CD4-positive, alpha-beta memory T cell (primary cell): ENCODE measurements at regions of chr3 and their contacts with region 1.

Region 1: GRCh38 chr3:160720123-160720746 is 35.8 kb upstream of the PPM1L start:
- DNase-seq: no peak
- H3K4me3 ChIP-seq: no peak overlapping the region
- H3K4me3 Mint-ChIP-seq: no peak overlapping the region
- H3K27ac ChIP-seq: no peak overlapping the region
- H3K27ac Mint-ChIP-seq: no peak overlapping the region
- H3K4me1 ChIP-seq: no peaks in the 10 kb centered on the region
- H3K4me1 Mint-ChIP-seq: no peaks in the 10 kb centered on the region
- H3K27me3 ChIP-seq: no peaks in the 10 kb centered on the region
- H3K27me3 Mint-ChIP-seq: peaks cover 11 to 14% of the 10 kb centered on the region in 2 donors

Region 2: GRCh38 chr3:160498202-160498601 is 222.0 kb before region 1 on chr3:
- CTCF ChIA-PET with region 1: no interaction called
- POLR2A ChIA-PET with region 1: no interaction called
- intact Hi-C with region 1: no loop called
- DNase-seq: no peak
- H3K4me3 ChIP-seq: no peak overlapping the region
- H3K4me3 Mint-ChIP-seq: no peak overlapping the region
- H3K27ac ChIP-seq: no peak overlapping the region
- H3K27ac Mint-ChIP-seq: no peak overlapping the region
- H3K4me1 ChIP-seq: no peaks in the 10 kb centered on the region
- H3K4me1 Mint-ChIP-seq: no peaks in the 10 kb centered on the region
- H3K27me3 ChIP-seq: no peaks in the 10 kb centered on the region
- H3K27me3 Mint-ChIP-seq: no peaks in the 10 kb centered on the region

Region 3: DNA sequence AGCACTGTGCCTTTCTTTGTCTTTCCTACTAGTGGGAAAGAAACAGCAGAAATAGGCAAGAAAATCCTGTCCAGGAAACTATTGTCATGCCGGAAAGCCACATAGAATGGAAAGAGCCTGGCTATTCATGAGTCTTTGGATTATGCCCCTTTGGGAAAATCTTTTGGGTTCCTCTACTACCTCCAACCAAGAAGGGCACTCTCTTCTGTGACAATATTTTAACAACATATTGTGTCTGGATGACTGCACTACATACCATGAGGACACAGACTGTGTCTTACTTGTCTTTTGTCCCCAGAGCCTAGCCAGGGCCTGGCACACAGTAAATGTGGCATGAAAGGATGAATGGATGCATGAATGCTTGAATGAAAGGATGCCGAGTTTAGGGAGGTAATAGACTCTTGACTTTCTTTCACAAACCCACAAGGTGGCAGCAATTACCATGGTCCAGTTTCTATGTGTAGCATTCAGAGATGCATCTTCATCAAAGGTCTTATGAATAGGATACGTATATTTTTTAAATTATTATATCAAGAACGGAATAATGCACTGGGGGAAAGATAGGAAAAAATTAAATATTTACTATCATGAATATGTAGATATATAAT is 12.9 kb before region 1 on chr3:
- CTCF ChIA-PET with region 1: interaction called, 16 read pairs
- POLR2A ChIA-PET with region 1: no interaction called
- intact Hi-C with region 1: no loop called
- DNase-seq: peak in 4 of 5 donors; percentile 36 to 44 (median 40)
- H3K4me3 ChIP-seq: no peak overlapping the region
- H3K4me3 Mint-ChIP-seq: no peak overlapping the region
- H3K27ac ChIP-seq: no peak overlapping the region
- H3K27ac Mint-ChIP-seq: no peak overlapping the region
- H3K4me1 ChIP-seq: no peaks in the 10 kb centered on the region
- H3K4me1 Mint-ChIP-seq: no peaks in the 10 kb centered on the region
- H3K27me3 ChIP-seq: no peaks in the 10 kb centered on the region
- H3K27me3 Mint-ChIP-seq: peaks cover 24 to 36% of the 10 kb centered on the region in 2 donors

Region 4: DNA sequence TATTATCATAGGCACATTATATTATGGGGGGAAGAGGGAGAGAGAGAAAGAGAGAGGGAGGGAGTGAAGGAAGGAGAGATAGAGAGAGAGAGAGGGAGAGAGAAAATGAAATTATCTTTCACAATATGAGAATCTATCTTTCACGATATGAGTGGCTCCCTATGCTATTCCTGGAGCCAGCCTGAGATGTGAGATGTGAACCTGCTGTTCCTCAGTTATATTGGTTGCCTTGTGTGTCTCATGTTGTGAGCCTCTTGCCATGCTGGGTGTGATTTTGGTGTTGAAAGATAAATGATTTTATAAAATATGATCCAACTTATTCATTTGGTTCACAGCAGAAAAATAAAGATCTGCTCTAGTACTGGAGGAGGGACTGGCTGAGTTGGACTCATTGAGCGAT is 184.5 kb after region 1 on chr3:
- CTCF ChIA-PET with region 1: no interaction called
- POLR2A ChIA-PET with region 1: no interaction called
- intact Hi-C with region 1: no loop called
- DNase-seq: no peak
- H3K4me3 ChIP-seq: no peak overlapping the region
- H3K4me3 Mint-ChIP-seq: no peak overlapping the region
- H3K27ac ChIP-seq: no peak overlapping the region
- H3K27ac Mint-ChIP-seq: no peak overlapping the region
- H3K4me1 ChIP-seq: no peaks in the 10 kb centered on the region
- H3K4me1 Mint-ChIP-seq: no peaks in the 10 kb centered on the region
- H3K27me3 ChIP-seq: no peaks in the 10 kb centered on the region
- H3K27me3 Mint-ChIP-seq: no peaks in the 10 kb centered on the region